ENCODE measurements at regions of chr19 and their contacts with region 1.

Region 1: GRCh38 chr19:58400916-58401839 is 5.7 kb downstream of the RNF225 start:
- DNase-seq: peak; percentile 99
- H3K4me3 Mint-ChIP-seq: peak overlapping the region; percentile 94
- H3K27ac Mint-ChIP-seq: peak overlapping the region; percentile 26
- H3K4me1 Mint-ChIP-seq: peaks cover 9% of the 10 kb centered on the region
- H3K27me3 Mint-ChIP-seq: peaks cover 11% of the 10 kb centered on the region

Region 2: DNA sequence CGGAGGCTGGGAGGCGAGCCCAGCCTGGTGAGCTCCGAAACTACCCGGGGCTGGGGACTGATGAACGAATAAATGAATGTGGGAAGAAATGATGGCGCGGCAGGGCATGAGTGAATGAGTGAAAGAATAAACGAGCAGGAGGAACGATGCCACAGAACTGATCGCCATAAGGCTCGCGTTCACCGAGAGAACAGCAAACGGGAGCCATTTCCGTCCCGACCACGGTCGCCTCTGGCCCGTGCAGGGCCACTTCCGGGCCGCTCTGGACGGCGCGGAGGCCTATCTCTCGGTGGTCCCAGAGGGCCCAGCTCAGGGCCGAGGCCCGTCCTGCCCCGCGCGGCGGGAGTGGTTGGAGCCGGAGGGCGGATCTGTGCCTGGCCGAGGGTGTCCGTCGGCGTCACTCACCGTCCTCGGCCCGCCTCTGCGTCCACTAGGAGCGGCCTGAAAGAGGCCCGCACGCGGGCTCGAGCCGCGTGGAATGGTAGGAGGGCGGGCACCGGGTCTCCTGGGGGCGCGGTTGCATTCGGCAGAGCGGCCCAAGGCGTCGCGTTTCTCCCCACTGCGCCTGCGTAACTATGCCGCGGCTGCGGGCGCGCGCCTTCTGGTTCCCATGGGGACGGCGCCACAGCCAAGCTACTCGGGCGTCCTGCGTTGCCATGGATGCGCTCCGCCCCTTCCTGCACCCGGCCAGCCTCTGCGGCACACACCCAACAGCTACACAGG is 38.7 kb before region 1 on chr19 and contains the start of gene ZNF497:
- CTCF ChIA-PET with region 1: no interaction called
- intact Hi-C with region 1: loop called (anchors 1 kb)
- DNase-seq: peak; percentile 97
- H3K4me3 Mint-ChIP-seq: peak within 1 kb of the TSS; percentile 93
- H3K27ac Mint-ChIP-seq: peak within 1 kb of the TSS; percentile 87
- H3K4me1 Mint-ChIP-seq: peaks cover 8% of the 10 kb centered on the region
- H3K27me3 Mint-ChIP-seq: no peaks in the 10 kb centered on the region
- total RNA-seq, gene ZNF497: 0.40 to 0.41 TPM

Region 3: DNA sequence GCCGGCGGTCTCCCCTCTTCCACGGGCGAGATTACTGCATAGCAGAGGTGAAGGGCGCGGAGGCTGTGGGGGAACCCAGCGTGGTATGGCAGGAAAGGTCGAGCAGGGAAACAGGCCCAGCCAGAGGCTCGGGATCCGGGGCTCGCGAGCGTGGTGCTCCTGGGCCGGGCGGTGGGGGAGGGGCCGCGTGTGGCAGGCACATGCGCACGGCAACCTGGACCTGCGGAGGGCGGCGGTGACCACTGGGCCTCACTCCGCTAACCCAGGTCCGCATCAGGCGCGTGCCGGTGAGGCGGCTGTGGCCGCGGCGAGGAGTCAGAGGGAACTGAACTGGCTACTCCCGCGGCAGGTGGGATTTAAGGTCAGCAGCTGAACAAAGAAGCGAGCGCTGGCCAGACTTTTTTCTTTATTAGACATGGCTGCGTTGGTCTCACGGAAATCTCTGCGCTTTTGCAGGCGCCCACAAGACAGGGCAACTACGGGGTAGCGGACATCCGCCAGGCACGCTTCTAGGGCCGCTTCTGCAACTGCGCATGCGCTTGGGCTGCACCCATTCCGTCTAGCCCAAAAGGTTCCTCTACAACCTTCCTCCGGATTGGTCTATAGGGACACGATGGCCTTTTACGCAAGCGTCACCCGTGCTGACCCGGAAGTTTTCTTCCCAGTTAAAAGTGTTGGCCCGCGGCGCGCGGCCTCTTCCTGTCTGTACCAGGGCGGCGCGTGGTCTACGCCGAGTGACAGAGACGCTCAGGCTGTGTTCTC is 14.4 kb before region 1 on chr19 and contains the start of gene RPS5:
- CTCF ChIA-PET with region 1: no interaction called
- intact Hi-C with region 1: loop called (anchors 1 kb)
- DNase-seq: peak; percentile 97
- H3K4me3 Mint-ChIP-seq: peak within 1 kb of the TSS; percentile 91
- H3K27ac Mint-ChIP-seq: peak within 1 kb of the TSS; percentile 96
- H3K4me1 Mint-ChIP-seq: peaks cover 35% of the 10 kb centered on the region
- H3K27me3 Mint-ChIP-seq: no peaks in the 10 kb centered on the region
- total RNA-seq, gene RPS5: 1,806 to 1,853 TPM

Region 4: GRCh38 chr19:58475714-58476497 is 74.7 kb after region 1 on chr19 and contains the start of gene ZNF446:
- CTCF ChIA-PET with region 1: no interaction called
- intact Hi-C with region 1: loop called (anchors 1 kb)
- DNase-seq: peak; percentile 97
- H3K4me3 Mint-ChIP-seq: peak within 1 kb of the TSS; percentile 94
- H3K27ac Mint-ChIP-seq: peak within 1 kb of the TSS; percentile 97
- H3K4me1 Mint-ChIP-seq: peaks cover 13% of the 10 kb centered on the region
- H3K27me3 Mint-ChIP-seq: no peaks in the 10 kb centered on the region
- total RNA-seq, gene ZNF446: 2.6 to 2.9 TPM

Measured in activated naive CD4-positive, alpha-beta T cell treated with anti-CD3 and anti-CD28 coated beads for 36 hours (primary cell).